ENCODE measurements at regions of chr12 and their contacts with region 1.

Region 1: DNA sequence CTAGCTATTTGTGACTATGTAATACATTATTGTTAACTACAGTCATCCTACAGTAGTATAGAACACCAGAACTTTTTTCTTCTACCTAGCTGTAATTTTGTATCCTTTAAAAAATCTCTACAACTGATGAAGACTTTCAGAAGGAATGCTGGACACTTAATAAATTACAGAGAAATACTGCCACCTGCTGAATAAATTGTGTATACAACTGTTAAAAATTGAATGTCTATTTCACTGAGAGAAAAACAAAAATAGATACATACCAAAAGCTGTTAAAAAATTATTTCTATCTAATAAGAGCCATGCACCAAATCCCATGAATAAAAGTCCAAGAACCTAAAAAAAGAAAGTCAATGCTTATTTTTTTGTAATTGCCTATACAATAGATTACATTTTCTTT is 6.6 kb downstream of the TSPAN19 start:
- DNase-seq: no peak
- H3K4me3 ChIP-seq: no peak overlapping the region
- H3K27ac ChIP-seq: no peak overlapping the region
- H3K27me3 ChIP-seq: no peaks in the 10 kb centered on the region
- CTCF ChIP-seq: peak; percentile 44

Region 2: GRCh38 chr12:84862186-84862585 is 167.3 kb before region 1 on chr12:
- CTCF ChIA-PET with region 1: interaction called, 12 read pairs
- POLR2A ChIA-PET with region 1: no interaction called
- DNase-seq: no peak
- H3K4me3 ChIP-seq: no peak overlapping the region
- H3K27ac ChIP-seq: no peak overlapping the region
- H3K27me3 ChIP-seq: no peaks in the 10 kb centered on the region
- CTCF ChIP-seq: no peak

Region 3: GRCh38 chr12:84912198-84913128 is 117.0 kb before region 1 on chr12 and contains the start of gene SLC6A15:
- CTCF ChIA-PET with region 1: interaction called, 23 read pairs
- POLR2A ChIA-PET with region 1: no interaction called
- DNase-seq: no peak
- H3K4me3 ChIP-seq: peak within 1 kb of the TSS; percentile 58
- H3K27ac ChIP-seq: no peak within 1 kb of the TSS
- H3K27me3 ChIP-seq: peaks cover 15% of the 10 kb centered on the region
- CTCF ChIP-seq: peak; percentile 51
- polyA plus RNA-seq, gene SLC6A15: 1.4 and 2.0 TPM in 2 replicates

Region 4: GRCh38 chr12:85057370-85057963 is 28.0 kb after region 1 on chr12:
- CTCF ChIA-PET with region 1: interaction called, 30 read pairs
- POLR2A ChIA-PET with region 1: no interaction called
- DNase-seq: peak; percentile 13
- H3K4me3 ChIP-seq: no peak overlapping the region
- H3K27ac ChIP-seq: no peak overlapping the region
- H3K27me3 ChIP-seq: no peaks in the 10 kb centered on the region
- CTCF ChIP-seq: peak; percentile 84

Region 5: DNA sequence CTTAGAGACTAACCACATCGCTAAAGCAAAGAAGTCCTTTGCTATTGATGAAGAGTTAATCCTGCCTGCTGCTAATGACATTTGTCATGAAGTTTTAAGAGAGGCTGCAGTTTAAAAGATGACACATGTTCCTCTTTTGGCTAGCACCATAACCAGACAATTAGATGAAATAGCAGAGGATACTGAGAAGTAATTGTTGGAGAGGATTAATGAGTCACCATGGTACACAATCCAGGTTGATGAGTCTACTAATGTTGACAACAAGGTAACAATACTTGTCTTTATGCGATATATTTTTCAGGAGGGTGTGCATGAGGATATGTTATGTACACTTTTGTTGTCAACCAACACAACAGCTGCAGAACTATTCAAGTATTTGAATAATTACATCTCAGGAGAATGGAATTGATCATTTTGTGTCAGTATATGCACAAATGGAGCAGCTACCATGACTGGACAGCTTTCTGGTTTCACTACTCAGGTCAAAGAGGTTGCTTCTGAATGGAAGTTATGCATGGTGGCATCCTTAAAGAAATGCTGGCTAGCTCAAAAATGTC is 63.4 kb after region 1 on chr12:
- CTCF ChIA-PET with region 1: no interaction called
- POLR2A ChIA-PET with region 1: no interaction called
- DNase-seq: no peak
- H3K4me3 ChIP-seq: no peak overlapping the region
- H3K27ac ChIP-seq: no peak overlapping the region
- H3K27me3 ChIP-seq: no peaks in the 10 kb centered on the region
- CTCF ChIP-seq: no peak

Region 6: DNA sequence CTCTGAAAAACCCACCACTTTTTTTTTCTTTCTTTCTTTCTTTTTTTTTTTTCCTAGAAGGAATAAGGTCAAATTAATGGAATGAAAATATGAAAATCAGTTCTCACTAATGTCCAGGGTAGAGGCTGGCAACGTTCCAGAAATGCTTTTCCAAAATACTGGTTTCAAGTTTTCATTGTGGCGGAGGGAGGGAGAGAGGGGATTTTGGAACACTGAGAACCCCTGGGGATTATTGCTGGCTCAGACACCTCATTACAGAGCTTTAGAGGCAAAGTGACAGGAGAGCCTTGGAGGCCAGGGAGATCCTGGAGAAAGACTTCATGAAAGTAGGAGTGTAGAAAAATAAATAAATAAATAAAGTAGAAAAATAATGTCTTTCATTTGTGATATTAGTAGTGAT is 296.0 kb after region 1 on chr12:
- CTCF ChIA-PET with region 1: no interaction called
- POLR2A ChIA-PET with region 1: no interaction called
- DNase-seq: no peak
- H3K4me3 ChIP-seq: no peak overlapping the region
- H3K27ac ChIP-seq: no peak overlapping the region
- H3K27me3 ChIP-seq: no peaks in the 10 kb centered on the region
- CTCF ChIP-seq: no peak